ENCODE measurements at regions of chr12 and their contacts with region 1.

Region 1: DNA sequence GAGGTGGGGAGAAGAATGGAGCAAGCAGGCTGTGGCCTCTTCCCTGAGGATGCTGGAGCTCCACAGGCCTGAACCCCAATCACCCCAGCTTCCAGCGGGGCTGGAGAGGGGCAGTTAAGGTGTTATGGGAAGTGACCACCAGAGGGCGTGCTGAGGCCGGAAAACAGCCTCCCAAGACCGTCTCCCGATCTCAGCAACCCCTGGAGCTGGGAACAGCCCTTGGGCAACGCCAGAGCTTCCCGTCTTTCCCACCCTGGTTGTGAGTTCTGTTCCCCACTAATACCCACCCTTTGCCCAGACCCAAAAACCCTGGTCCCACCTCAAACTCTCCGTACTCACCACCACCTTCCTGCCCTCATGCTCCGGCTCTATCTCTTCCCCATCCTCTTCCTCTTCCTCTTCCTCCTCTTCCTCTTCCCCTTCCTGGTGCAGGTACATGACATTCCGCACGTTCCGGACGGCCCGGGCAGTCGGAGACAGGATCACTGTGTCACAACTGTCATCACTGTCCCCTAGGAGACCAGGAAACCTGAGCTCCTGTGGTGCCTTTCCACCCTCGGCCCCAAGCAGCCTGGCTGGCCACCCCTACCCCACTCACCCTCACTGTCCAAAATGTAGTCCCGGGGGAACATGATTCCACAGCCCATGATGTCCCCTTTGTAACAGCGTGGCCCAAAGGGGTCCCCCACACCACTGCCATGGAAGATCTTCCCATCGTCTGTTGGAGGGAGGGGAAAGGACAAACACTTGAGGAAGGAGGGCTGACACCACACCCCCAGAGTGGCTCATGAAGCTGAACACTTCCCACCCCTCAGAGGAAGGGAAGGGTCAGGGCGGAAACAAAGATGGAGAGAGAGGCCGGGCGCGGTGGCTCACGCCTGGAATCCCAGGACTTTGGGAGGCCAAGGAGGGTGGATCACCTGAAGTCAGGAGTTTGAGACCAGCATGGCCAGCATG is 12.9 kb downstream of the SPRYD3 start:
- DNase-seq: peak; percentile 78
- H3K4me3 Mint-ChIP-seq: no peak overlapping the region
- H3K27ac Mint-ChIP-seq: no peak overlapping the region
- H3K4me1 Mint-ChIP-seq: peaks cover 5% of the 10 kb centered on the region
- H3K27me3 Mint-ChIP-seq: peaks cover 3% of the 10 kb centered on the region

Region 2: GRCh38 chr12:52748578-52748977 is 317.7 kb before region 1 on chr12:
- CTCF ChIA-PET with region 1: no interaction called
- DNase-seq: no peak
- H3K4me3 Mint-ChIP-seq: no peak overlapping the region
- H3K27ac Mint-ChIP-seq: no peak overlapping the region
- H3K4me1 Mint-ChIP-seq: peaks cover 6% of the 10 kb centered on the region
- H3K27me3 Mint-ChIP-seq: peaks cover 29% of the 10 kb centered on the region

Region 3: GRCh38 chr12:53079226-53080117 is 13.2 kb after region 1 on chr12 and contains the start of gene SPRYD3:
- CTCF ChIA-PET with region 1: interaction called, 47 read pairs
- DNase-seq: peak; percentile 98
- H3K4me3 Mint-ChIP-seq: peak within 1 kb of the TSS; percentile 92
- H3K27ac Mint-ChIP-seq: peak within 1 kb of the TSS; percentile 92
- H3K4me1 Mint-ChIP-seq: peaks cover 29% of the 10 kb centered on the region
- H3K27me3 Mint-ChIP-seq: no peaks in the 10 kb centered on the region

Region 4: DNA sequence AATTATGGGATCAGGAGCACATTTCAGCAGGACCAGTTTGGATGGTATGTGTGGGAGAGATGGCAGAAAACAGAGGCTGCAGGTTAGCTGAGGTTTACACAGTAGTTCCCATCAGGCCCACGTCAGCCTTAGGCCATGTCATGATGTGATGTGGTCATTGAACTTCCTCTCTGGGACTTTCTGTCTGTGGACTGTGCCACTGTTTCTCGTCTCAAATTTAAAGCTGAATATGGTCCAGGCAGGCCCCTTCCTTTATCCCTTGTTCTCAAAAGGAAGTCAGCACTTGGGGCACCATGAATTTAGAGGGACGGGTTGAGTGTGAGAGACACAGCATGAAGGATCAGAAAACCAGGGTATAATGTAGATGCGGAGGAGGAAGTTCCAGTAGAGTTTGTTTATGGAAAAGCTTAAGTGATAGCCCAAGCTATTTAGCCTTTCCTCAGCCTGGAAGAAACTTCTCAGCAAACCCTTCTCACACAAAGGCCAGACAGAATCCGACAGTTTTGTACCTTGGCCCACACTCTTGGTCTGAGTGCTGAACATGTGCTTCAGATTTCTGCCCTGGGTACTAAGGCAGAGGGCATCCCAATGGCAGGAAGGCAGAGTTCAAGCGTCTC is 27.6 kb after region 1 on chr12:
- CTCF ChIA-PET with region 1: interaction called, 250 read pairs
- DNase-seq: no peak
- H3K4me3 Mint-ChIP-seq: no peak overlapping the region
- H3K27ac Mint-ChIP-seq: no peak overlapping the region
- H3K4me1 Mint-ChIP-seq: peaks cover 23% of the 10 kb centered on the region
- H3K27me3 Mint-ChIP-seq: peaks cover 70% of the 10 kb centered on the region

Region 5: DNA sequence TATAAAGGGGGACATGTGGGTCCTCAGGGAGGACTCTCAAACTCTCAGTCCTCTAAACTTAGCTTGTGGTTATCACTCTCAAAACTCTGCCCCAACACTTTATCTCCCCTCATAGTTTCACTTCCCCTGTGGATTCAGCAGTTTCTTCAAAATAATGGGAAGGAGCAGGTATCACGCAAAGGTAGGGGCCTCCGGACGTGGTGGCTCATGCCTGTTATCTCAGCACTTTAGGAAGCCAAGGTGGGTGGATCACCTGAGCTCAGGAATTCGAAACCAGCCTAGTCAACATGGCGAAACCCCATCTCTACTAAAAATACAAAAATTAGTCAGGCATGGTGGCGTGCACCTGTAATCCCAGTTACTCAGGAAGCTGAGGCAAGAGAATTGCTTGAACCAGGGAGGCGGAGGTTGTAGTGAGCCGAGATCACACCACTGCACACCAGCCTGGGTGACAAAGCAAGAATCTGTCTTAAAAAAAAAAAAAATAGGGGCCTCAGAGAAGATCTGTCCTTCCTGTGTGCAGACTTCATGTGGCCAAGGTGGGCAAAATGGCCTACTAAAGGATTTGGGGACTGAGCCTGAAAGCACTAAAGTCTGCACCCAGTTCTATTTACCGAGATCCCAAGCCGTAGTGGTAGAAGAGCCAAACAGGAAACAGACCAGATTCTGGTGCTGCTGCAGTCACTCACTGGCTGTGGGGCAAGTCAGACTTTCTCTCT is 134.4 kb after region 1 on chr12:
- CTCF ChIA-PET with region 1: interaction called, 16 read pairs
- DNase-seq: peak; percentile 55
- H3K4me3 Mint-ChIP-seq: peak overlapping the region; percentile 48
- H3K27ac Mint-ChIP-seq: peak overlapping the region; percentile 89
- H3K4me1 Mint-ChIP-seq: peaks cover 88% of the 10 kb centered on the region
- H3K27me3 Mint-ChIP-seq: no peaks in the 10 kb centered on the region

Measured in activated naive CD4-positive, alpha-beta T cell treated with anti-CD3 and anti-CD28 coated beads, Interleukin-2, amount 10 ng/mL, durations not matched to agents 7 days and 5 days (primary cell).